ACHN (cell line): ENCODE measurements at regions of chr7 and their contacts with region 1.

Region 1: DNA sequence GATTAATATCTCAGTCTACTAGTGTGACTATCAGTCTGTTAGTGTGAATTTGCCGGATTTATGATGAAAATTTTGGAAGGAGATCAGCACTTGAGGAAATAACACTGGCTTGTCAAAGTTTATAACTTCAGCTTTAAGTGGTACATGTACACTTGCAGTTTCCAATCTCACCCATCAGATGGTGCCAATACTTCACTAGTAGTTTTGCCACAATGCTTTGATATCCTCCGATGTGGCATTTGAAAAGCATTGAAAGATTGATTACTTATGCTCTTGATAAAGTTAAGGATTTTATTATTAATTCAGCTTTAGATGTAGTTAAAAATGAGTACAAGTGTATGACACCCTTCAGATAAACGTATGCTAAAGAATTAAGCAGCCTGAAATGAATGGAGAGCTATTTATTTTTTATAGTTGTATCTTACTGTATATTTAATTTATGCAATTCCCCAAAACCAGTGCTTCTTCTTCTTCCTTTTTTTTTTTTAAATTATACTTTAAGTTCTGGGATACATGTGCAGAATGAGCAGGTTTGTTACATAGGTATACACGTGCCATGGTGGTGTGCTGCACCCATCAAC is 98.2 kb downstream of the ANLN start:
- DNase-seq: peak; percentile 81

Region 2: DNA sequence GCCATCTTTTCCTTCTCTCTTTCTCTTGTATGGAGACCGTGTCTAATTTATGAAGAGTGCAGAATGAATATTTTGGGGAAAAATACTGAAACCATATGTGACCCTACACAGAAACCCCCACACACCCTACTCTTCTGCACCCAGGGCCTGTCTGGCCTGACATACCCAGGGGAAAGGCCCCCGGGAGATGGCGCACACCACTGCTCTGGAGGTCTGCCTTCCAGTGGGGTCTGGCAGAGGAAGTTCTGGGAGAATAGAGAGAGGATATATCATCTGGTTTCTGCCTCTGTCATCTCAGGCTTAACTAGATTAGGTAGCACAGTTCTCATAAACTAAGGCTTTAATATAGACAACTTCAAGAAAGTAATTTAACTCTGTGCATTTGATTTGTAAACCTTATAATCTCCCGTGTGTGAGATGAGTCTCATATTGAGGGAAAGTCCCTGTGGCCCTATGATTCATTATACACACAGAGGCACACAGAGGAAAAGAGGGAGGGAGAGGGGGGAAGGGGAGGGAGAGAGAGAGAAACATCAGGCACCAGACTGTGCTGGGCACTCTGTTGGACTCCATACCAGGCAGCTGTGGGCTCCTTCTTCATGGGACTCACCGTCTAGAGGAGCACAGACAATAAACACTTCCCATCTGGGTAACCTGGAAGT is 113.2 kb after region 1 on chr7:
- in situ Hi-C with region 1: loop called (anchors 25 kb)
- DNase-seq: peak; percentile 79

Region 3: DNA sequence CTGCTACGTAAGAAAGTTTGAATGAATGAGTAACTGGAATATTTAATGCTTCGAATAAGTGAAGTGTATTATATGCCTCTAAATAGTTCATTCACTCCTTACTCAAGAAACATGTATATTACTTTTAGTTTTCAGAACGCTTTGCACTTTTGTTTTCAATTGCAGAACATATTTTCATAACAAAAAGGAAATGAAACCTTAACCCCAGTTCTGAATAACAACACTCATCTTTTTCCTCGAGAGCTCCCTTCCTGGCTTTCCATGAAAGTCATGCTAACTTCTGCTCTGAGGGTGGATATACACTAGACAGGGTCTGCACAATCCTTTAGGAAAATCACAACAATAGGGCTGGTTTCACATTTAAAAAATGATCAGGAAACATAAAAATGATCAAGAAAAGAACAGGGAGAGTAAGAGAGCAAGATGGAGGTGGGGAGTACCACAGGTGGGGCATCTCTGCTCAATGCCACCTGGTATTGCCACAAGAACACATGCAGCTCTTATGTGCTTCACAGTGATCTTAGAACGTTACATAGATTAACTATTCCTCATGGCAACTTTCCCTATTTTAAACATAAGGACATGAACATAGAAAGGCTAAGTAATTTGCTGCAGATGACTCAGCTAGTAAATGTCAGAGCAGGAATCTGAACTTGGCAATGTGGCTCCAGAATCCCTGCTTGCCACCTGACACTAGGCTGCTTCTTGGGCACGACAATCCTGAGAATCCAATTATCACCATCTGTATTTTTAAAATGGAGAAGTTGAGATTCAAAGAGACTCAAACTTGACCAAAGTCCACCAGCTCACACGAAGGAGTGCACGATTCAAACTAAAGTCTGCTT is 456.0 kb after region 1 on chr7:
- in situ Hi-C with region 1: no loop called
- DNase-seq: no peak

Region 4: DNA sequence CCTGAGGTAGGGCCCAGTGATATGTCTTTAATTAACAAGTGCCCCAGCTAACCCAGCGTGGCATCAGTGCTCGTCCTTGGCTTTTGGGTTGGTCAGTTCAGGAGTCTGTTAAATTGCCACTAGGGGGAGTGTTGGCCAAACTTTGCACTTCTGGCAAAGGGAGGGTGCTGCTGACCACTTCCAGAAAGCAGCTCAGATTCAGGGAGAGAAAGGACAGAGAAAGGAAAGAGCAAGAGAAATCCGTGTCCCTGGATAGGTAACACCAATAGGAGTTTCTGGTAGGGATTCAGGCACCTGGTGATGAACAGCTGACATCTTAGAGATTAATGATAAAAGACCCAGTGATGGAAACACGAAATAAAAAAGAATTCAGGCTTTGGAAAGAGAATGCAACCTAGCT is 479.5 kb after region 1 on chr7:
- in situ Hi-C with region 1: loop called (anchors 25 kb)
- DNase-seq: peak; percentile 80

Region 5: GRCh38 chr7:37160656-37161055 is 672.8 kb after region 1 on chr7:
- in situ Hi-C with region 1: no loop called
- DNase-seq: no peak

Region 6: DNA sequence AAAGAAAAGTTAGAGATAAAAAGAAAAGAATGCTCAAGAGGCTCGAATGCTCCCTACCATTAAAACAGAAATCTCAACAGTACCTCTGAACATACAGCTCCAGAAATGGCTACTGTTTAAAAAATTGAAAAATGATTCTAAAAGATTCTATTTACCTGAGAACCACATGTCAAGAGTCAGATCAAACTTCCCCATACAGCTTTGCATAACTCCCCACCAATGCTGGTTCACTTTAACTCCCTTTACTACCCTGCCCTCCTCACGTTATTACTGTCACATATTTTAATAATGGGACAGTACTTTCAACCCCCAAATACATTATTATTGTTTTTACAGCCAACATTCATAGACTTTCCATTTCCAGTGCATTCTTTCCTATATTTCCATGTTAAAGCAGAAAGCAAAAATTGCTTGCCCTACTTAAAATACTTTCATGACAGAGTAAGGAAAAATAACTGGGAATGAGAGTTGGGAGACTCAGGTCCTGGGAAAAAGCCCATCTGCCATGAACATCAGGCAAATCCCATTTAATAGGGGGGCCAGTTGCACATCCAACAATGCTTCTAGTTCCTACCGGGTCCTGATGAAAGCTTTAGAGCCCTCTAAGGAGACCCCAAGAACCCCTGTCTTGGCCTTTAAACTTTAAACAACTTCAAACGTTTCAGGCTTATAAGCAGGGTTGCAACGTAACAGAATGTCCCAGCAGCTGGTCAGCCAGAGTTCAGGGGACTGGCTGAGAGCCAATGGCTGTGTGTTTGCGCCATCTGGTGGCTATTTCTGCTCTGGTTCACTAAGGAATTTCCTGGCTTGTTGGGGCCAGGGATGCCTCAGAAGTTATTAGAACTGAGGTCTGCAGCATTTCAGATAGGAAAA is 713.4 kb after region 1 on chr7:
- in situ Hi-C with region 1: loop called (anchors 25 kb)
- DNase-seq: peak; percentile 79